ENCODE measurements at regions of chr11 and their contacts with region 1.

Region 1: GRCh38 chr11:19561011-19561410 is 151.6 kb upstream of the NAV2 start:
- DNase-seq: peak in 1 of 10 donors; percentile 77

Region 2: DNA sequence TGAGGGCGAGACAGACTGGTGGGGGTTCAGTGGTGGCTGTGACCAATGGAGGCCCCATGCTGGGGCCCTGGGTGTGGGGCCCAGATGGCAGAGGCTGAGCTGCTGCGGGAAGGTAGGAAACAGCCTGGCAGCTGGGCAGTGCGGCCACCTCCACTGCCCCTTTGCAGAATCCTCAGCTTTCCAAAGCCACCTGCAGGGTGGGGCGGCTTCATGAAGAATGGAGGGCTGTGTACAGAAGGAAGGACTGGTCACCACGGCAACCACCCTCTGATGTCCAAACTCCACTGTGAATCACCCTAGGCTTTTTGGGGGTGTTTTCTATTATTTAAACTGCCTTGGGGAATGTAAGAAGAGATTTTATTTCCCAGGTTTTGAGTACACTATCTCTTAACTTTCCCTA is 14.7 kb before region 1 on chr11:
- intact Hi-C with region 1: no loop called
- DNase-seq: peak in 1 of 10 donors; percentile 59

Region 3: DNA sequence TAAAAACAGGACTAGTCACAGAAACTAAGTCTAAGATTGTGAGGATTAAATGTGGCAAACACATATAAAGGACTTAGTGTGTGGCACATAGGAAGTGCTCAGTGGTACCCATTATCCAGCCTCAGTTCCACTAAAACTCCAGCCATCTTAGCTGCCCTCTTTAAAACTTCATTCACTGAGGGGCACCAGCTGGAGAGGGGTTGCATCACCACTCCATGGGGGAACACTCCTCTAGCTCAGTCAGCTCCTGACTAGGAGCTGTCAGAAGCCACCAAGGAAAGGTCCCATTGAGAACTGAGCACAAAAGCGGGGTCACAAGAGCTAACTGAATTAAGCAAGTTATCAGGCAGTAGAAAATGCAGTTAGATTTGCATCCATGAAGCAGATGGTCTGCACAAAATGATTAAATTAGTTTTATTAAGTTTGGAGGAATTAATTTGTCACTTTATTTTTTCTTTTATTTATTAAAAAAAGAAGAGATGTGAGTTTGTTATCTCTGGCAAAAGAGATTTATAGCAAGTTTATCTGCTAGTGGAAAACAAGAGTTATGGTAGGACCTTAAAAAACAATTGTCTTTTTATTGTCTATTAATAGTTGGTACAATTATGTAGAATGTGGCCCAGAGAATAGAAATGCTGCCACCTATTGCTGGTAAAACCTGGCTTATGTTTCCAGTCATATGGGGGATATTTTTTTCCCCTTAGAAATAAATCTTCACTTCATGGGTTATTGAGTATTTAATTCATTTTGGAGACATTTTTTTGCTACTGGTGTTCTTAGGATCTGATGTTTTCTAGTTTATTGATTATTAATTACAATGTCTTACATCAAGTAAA is 247.3 kb after region 1 on chr11:
- intact Hi-C with region 1: loop called (anchors 5 kb)
- DNase-seq: no peak